ENCODE measurements at regions of chr1 and their contacts with region 1.

Region 1: GRCh38 chr1:168342572-168343280 is 62.0 kb downstream of the TBX19 start:
- DNase-seq: peak; percentile 95
- H3K4me3 Mint-ChIP-seq: peak overlapping the region; percentile 35
- H3K27ac Mint-ChIP-seq: peak overlapping the region; percentile 57
- H3K4me1 Mint-ChIP-seq: peaks cover 38% of the 10 kb centered on the region
- H3K27me3 Mint-ChIP-seq: no peaks in the 10 kb centered on the region

Region 2: DNA sequence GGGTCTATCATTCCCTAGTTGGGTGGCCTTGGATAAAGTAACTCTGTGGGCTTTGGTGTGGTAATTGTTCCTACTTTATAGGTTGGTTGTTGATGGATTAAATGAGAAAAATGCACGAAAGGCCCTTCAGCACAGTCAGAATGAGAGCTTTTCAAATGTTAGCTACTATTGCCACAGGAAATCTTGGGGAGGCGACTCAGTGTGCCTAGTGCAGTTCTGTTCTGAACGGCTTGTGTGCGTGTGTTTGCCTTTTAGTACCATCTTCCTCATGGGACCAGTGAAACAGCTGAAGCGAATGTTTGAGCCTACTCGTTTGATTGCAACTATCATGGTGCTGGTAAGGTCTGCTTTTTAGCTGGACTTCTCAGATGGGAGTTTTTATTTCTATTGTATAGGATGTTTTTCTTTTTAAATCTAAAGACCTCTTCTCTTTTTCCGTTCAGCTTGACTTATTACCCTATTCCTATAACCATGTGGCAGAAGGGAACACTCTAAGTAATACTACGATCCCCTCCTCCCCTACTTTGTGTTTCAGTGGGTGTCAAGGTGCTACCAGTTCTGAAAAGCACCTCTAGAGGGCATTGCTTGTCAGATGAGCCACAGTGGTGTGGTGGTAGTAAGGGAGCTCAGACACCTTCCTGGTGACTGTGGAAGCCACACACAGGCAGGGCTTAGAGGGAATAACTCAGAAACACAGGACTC is 107.7 kb before region 1 on chr1:
- intact Hi-C with region 1: loop called (anchors 2 kb)
- DNase-seq: peak; percentile 85
- H3K4me3 Mint-ChIP-seq: peak overlapping the region; percentile 52
- H3K27ac Mint-ChIP-seq: peak overlapping the region; percentile 92
- H3K4me1 Mint-ChIP-seq: peaks cover 67% of the 10 kb centered on the region
- H3K27me3 Mint-ChIP-seq: no peaks in the 10 kb centered on the region

Region 3: DNA sequence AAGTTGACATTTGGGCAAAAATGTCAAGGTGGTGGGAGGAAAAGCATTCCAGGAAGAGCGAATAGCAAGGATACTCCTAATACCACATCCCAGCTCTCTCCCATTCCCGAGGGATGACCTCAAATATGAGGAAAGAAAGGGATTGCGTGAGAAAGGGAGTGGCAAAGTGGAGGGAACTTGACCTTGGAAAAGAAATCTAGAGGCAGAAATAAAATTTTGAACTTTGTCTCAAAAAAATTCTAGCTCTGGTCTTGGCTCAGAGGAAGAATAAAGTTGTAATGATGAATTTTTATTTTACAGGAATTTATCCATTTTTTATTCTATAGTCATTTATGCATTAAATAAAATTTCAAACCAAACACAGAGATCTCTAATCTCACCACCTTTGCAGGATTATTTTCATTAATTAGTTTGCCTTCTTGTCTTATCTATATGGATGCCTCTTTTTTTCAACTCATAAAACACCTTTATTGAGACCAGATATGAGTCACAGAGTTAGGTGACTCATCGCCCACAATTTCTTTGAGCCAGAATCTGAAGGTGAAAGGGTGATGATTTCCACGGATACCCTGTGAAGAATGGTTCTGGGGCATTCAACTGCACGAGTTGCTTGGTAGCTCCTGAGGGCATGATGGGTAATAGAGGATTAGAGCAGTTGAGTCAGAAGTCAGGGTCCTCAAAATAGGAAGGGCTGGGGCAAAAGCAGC is 66.0 kb after region 1 on chr1:
- intact Hi-C with region 1: loop called (anchors 2 kb)
- DNase-seq: peak; percentile 90
- H3K4me3 Mint-ChIP-seq: peak overlapping the region; percentile 53
- H3K27ac Mint-ChIP-seq: peak overlapping the region; percentile 86
- H3K4me1 Mint-ChIP-seq: peaks cover 39% of the 10 kb centered on the region
- H3K27me3 Mint-ChIP-seq: no peaks in the 10 kb centered on the region

Region 4: DNA sequence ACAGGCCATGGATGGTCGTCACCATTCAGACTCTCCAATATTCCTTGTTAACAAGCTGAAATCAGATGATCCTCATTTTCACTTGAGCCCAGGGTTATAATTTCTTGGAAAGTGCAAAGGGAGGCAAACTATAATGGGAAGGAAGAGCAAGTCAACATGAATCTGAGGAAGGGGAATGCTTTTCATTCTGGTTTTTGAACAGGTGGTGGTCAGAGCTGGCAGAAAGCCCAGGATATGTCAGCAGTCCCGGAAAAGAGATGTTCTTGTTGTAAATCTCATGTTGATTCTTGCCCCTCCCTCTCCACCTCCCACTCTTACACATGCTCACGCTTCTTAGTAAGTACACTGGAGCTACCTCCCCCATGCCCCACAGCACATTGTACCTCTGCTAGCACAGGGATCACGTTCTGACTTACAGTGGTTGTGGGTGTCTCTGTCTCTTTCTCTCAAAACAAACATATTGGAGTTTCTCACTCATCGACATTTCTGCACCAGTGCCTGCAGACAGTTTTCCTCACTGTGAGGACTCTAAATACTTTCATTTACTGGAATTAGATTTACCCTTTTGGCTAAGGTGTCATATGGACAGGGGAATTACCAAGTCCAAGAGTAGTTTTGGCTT is 123.5 kb after region 1 on chr1:
- intact Hi-C with region 1: loop called (anchors 1 kb)
- DNase-seq: peak; percentile 75
- H3K4me3 Mint-ChIP-seq: peak overlapping the region; percentile 32
- H3K27ac Mint-ChIP-seq: peak overlapping the region; percentile 71
- H3K4me1 Mint-ChIP-seq: peaks cover 58% of the 10 kb centered on the region
- H3K27me3 Mint-ChIP-seq: no peaks in the 10 kb centered on the region

Region 5: DNA sequence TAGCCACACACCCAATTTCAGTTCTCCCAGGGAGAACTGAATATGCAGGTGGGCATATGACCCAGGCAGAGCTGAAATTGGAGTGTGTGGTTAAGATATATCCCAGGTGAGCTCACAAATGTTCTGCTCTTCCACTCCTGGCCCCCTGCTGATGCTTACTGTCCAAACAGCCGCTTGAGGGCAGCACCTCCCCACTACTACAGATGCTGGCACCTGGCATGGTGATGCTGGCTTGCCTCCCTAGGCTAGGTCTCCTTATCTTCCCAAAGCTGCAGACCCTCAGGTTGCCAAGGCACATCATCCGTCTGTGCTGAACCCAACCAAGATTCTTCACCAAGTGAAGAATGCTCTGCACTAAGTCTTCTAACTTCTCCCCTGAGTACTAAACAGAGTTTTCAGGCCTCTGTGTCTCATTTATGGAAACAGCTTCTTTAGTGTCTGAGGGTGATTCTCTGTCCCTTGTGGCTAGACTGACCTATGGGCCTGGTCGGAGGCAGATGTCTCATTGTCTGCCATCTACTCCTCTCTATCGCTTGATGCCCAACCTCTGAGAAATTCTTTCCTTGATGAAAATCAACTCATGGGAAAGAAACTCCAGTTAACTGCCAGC is 260.9 kb after region 1 on chr1:
- intact Hi-C with region 1: loop called (anchors 2 kb)
- DNase-seq: peak; percentile 89
- H3K4me3 Mint-ChIP-seq: no peak overlapping the region
- H3K27ac Mint-ChIP-seq: no peak overlapping the region
- H3K4me1 Mint-ChIP-seq: peaks cover 2% of the 10 kb centered on the region
- H3K27me3 Mint-ChIP-seq: peaks cover 15% of the 10 kb centered on the region

Region 6: GRCh38 chr1:169348383-169349036 is 1005.8 kb after region 1 on chr1:
- intact Hi-C with region 1: loop called (anchors 2 kb)
- DNase-seq: peak; percentile 80
- H3K4me3 Mint-ChIP-seq: no peak overlapping the region
- H3K27ac Mint-ChIP-seq: no peak overlapping the region
- H3K4me1 Mint-ChIP-seq: peaks cover 11% of the 10 kb centered on the region
- H3K27me3 Mint-ChIP-seq: no peaks in the 10 kb centered on the region

Measured in activated CD4-positive, alpha-beta T cell treated with anti-CD3 and anti-CD28 coated beads, Interleukin-2, amount 10 ng/mL, durations not matched to agents 24 days and 14 days (primary cell).